ENCODE measurements at regions of chr19 and their contacts with region 1.

Region 1: GRCh38 chr19:13234518-13234917 is 84.3 kb downstream of the IER2 start:
- DNase-seq: peak in 2 of 3 donors; percentile 46 to 59
- H3K4me3 ChIP-seq: no peak overlapping the region
- H3K4me3 Mint-ChIP-seq: peak overlapping the region; percentile 35 to 47
- H3K27ac ChIP-seq: no peak overlapping the region
- H3K27ac Mint-ChIP-seq: no peak overlapping the region
- H3K4me1 ChIP-seq: peaks cover 7 to 8% of the 10 kb centered on the region in 2 donors
- H3K4me1 Mint-ChIP-seq: peaks cover 8% of the 10 kb centered on the region
- H3K27me3 ChIP-seq: no peaks in the 10 kb centered on the region
- H3K27me3 Mint-ChIP-seq: peaks cover 7 to 19% (median 8%) of the 10 kb centered on the region in 3 donors
- CTCF ChIP-seq: peak; percentile 87

Region 2: DNA sequence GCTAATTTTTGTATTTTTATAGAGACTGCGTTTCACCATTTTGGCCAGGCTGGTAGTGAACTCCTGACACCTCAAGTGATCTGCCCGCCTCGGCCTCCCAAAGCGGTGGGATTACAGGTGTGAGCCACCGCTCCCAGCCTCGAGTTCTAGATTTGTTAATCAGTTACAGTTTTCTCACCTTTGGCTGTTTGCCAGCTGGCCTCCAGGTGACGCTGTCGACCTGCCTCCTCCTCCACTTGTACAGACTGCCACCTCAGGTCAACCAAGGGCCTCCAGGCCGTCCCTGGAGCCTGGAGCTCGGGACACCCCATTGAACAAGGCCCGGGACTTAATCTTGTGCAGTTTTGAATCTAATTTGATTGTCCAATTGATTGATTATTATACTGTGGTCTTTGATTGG is 38.8 kb before region 1 on chr19:
- intact Hi-C with region 1: loop called in 1 of 2 experiments (anchors 5 kb)
- DNase-seq: no peak
- H3K4me3 ChIP-seq: no peak overlapping the region
- H3K4me3 Mint-ChIP-seq: no peak overlapping the region
- H3K27ac ChIP-seq: no peak overlapping the region
- H3K27ac Mint-ChIP-seq: no peak overlapping the region
- H3K4me1 ChIP-seq: peaks cover 0 to 5% of the 10 kb centered on the region in 2 donors
- H3K4me1 Mint-ChIP-seq: peaks cover 8% of the 10 kb centered on the region
- H3K27me3 ChIP-seq: no peaks in the 10 kb centered on the region
- H3K27me3 Mint-ChIP-seq: peaks cover 0 to 4% (median 0%) of the 10 kb centered on the region in 3 donors
- CTCF ChIP-seq: no peak

Measured in CD14-positive monocyte (primary cell).